Adrenal gland (tissue), 19 donors: ENCODE measurements at regions of chr11 and their contacts with region 1.

Region 1: GRCh38 chr11:613369-614268 is 2.1 kb downstream of the IRF7 start:
- DNase-seq: peak in 3 of 7 donors; percentile 50 to 86 (median 63)
- H3K4me3 ChIP-seq: no peak overlapping the region
- H3K27ac ChIP-seq: peak overlapping the region in 2 of 5 donors; percentile 26 to 98
- H3K4me1 ChIP-seq: peaks cover 0 to 16% of the 10 kb centered on the region in 2 donors
- H3K27me3 ChIP-seq: no peaks in the 10 kb centered on the region
- CTCF ChIP-seq: no peak
- POLR2A ChIP-seq: no peak

Region 2: DNA sequence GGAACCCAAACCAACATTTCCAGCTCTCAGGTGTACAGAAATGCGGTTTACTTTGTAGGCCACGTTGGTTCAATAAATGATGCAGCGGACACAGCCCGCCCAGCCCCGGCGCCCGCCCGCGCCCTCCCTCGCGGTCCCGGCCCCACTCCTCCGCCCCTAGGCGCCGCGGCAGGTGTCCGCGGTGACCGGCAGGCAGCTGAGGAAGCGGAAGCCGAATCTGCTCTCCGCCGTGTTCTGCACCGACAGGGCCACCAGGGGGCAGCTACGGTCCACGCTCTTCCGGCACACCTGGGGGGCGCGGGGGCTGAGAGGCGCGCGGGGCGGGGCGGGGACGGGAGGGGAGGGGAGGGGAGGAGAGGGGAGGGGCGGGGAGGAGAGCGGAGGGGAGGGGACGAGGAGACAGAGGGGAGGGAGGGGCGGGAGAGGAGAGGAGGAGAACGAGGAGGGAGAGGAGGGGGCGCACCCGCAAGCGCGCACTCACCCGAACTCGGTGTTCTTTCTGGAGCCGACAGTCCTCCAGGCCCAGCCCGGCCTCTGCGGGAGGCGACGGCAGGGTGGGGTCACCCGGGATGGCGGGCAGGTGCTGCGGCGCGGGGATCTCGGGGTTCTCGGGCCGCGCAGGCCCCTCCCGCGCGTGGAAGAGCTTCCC is 58.7 kb before region 1 on chr11:
- intact Hi-C with region 1: loop called in 1 of 2 experiments (anchors 5 kb)
- DNase-seq: peak in 3 of 7 donors; percentile 52 to 59 (median 57)
- H3K4me3 ChIP-seq: peak overlapping the region in 1 of 4 donors; percentile 41
- H3K27ac ChIP-seq: no peak overlapping the region
- H3K4me1 ChIP-seq: peaks cover 1 to 15% of the 10 kb centered on the region in 2 donors
- H3K27me3 ChIP-seq: peaks cover 24% of the 10 kb centered on the region
- CTCF ChIP-seq: peak in 4 of 6 experiments; percentile 27 to 60 (median 36)
- POLR2A ChIP-seq: no peak

Region 3: DNA sequence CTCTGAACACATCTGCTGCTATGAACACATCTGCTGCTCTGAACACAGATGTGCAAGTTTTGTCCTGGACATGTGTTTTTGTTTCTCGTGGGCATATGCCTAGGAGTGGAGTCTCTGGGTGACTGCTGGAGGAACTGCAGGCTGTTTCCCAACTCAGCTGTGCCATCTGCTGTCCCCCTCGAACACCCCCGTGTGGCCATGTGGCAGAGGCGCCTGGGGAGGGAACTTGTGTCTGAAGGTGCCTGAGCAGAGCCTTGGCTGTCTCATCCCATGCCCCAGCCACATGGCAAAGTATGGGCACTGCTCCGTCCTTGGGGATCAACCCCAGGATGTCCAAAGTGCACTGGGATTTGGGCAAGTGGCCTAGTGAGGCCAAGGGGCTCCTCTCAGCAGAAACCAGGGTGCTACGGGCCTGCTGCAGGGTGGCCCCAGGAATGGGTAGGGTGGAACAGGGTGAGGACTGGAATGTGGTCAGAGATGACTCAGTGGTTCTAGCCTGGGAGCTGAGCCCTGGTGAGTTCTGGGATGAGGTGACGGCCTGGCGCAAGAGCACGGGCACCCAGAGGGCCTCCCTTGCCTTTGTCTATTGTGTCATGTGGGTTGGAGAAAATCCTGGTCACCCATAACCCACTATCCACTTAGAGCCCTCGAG is 148.9 kb after region 1 on chr11:
- intact Hi-C with region 1: no loop called
- DNase-seq: peak; percentile 40 to 85 (median 76)
- H3K4me3 ChIP-seq: no peak overlapping the region
- H3K27ac ChIP-seq: peak overlapping the region in 4 of 5 donors; percentile 23 to 59 (median 47)
- H3K4me1 ChIP-seq: no peaks in the 10 kb centered on the region
- H3K27me3 ChIP-seq: no peaks in the 10 kb centered on the region
- CTCF ChIP-seq: peak in 4 of 6 experiments; percentile 23 to 52 (median 34)
- POLR2A ChIP-seq: no peak